ENCODE measurements at regions of chrX and their contacts with region 1.

Region 1: DNA sequence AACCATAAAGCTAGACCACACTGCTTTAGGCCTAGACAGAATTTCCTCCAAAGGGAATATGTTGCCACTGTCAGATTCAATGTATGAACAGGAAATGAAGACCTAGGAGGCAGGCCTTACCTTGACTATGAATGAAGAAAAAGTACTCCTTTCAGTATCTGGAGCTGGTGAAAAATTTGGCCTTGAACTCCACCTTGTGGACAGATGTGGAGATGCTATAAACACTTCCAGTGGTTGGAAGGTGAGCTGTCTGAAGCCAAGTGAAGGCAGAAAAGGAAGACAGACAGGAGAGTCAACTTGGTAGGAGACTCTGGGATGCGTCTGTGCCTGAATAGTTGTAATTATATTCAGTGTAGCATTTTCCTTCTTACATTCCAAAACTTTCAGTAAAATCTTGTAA is 17.2 kb downstream of the SPIN3 start:
- DNase-seq: peak in 1 of 2 experiments; percentile 43
- H3K4me3 ChIP-seq: no peak overlapping the region
- H3K4me3 Mint-ChIP-seq: no peak overlapping the region
- H3K27ac Mint-ChIP-seq: no peak overlapping the region
- H3K4me1 ChIP-seq: no peaks in the 10 kb centered on the region
- H3K4me1 Mint-ChIP-seq: no peaks in the 10 kb centered on the region
- H3K27me3 ChIP-seq: no peaks in the 10 kb centered on the region
- H3K27me3 Mint-ChIP-seq: no peaks in the 10 kb centered on the region
- CTCF ChIP-seq: peak; percentile 35 to 52

Region 2: DNA sequence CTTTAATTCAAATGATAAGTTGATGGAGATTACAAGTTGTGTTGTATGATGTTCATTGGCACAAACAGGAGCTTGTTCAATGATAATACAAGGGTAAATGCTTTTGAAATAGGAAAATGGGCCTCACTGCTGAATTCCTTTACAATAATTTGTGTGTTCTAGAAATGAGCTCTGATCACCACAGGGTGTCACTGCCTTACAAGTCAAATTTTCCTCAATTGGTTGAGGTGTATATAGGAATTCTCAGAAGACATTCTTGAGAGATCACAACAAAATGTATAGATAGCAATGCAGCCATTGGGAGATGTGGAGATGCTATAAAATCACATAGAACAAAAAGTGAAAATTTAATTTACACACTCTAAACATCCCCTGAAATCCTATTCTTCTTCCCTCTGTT is 696.4 kb before region 1 on chrX:
- CTCF ChIA-PET with region 1: no interaction called
- POLR2A ChIA-PET with region 1: no interaction called
- intact Hi-C with region 1: loop called (anchors 5 kb)
- DNase-seq: peak in 1 of 2 experiments; percentile 9
- H3K4me3 ChIP-seq: no peak overlapping the region
- H3K4me3 Mint-ChIP-seq: no peak overlapping the region
- H3K27ac Mint-ChIP-seq: no peak overlapping the region
- H3K4me1 ChIP-seq: no peaks in the 10 kb centered on the region
- H3K4me1 Mint-ChIP-seq: no peaks in the 10 kb centered on the region
- H3K27me3 ChIP-seq: no peaks in the 10 kb centered on the region
- H3K27me3 Mint-ChIP-seq: no peaks in the 10 kb centered on the region
- CTCF ChIP-seq: peak; percentile 19 to 28

Region 3: GRCh38 chrX:56802921-56803849 is 175.0 kb before region 1 on chrX:
- CTCF ChIA-PET with region 1: no interaction called
- POLR2A ChIA-PET with region 1: no interaction called
- intact Hi-C with region 1: loop called (anchors 1 kb)
- DNase-seq: peak in 1 of 2 experiments; percentile 29
- H3K4me3 ChIP-seq: no peak overlapping the region
- H3K4me3 Mint-ChIP-seq: no peak overlapping the region
- H3K27ac Mint-ChIP-seq: no peak overlapping the region
- H3K4me1 ChIP-seq: no peaks in the 10 kb centered on the region
- H3K4me1 Mint-ChIP-seq: no peaks in the 10 kb centered on the region
- H3K27me3 ChIP-seq: no peaks in the 10 kb centered on the region
- H3K27me3 Mint-ChIP-seq: no peaks in the 10 kb centered on the region
- CTCF ChIP-seq: peak in 1 of 2 experiments; percentile 28

Region 4: GRCh38 chrX:56920338-56920997 is 57.7 kb before region 1 on chrX:
- CTCF ChIA-PET with region 1: no interaction called
- POLR2A ChIA-PET with region 1: no interaction called
- intact Hi-C with region 1: no loop called
- DNase-seq: peak in 1 of 2 experiments; percentile 12
- H3K4me3 ChIP-seq: no peak overlapping the region
- H3K4me3 Mint-ChIP-seq: no peak overlapping the region
- H3K27ac Mint-ChIP-seq: no peak overlapping the region
- H3K4me1 ChIP-seq: no peaks in the 10 kb centered on the region
- H3K4me1 Mint-ChIP-seq: peaks cover 8% of the 10 kb centered on the region
- H3K27me3 ChIP-seq: no peaks in the 10 kb centered on the region
- H3K27me3 Mint-ChIP-seq: no peaks in the 10 kb centered on the region
- CTCF ChIP-seq: no peak

Region 5: GRCh38 chrX:56995271-56995994 is 17.3 kb after region 1 on chrX and contains the start of gene SPIN3:
- CTCF ChIA-PET with region 1: no interaction called
- POLR2A ChIA-PET with region 1: no interaction called
- intact Hi-C with region 1: no loop called
- DNase-seq: peak; percentile 92 to 95
- H3K4me3 ChIP-seq: peak within 1 kb of the TSS; percentile 74
- H3K4me3 Mint-ChIP-seq: peak within 1 kb of the TSS; percentile 92
- H3K27ac Mint-ChIP-seq: peak within 1 kb of the TSS; percentile 85
- H3K4me1 ChIP-seq: no peaks in the 10 kb centered on the region
- H3K4me1 Mint-ChIP-seq: no peaks in the 10 kb centered on the region
- H3K27me3 ChIP-seq: no peaks in the 10 kb centered on the region
- H3K27me3 Mint-ChIP-seq: no peaks in the 10 kb centered on the region
- CTCF ChIP-seq: no peak
- total RNA-seq, gene SPIN3: 17.9 TPM in 2 replicates

Region 6: DNA sequence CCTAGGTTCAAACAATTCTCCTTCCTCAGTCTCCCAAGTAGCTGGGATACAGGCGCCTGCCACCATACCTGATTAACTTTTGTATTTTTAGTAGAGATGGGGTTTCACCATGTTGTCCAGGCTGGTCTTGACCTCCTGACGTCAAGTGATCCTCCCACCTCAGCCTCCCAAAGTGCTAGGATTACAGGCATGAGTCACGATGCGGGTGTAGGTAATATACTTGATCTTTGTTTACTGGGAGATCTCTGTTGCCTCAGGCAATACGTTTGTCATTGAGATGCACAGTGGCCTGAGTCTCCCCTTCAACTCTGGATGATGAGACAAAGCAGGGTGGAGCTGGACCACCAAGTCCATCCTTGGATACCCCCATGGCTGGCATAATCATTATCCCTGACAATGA is 61.9 kb after region 1 on chrX:
- CTCF ChIA-PET with region 1: no interaction called
- POLR2A ChIA-PET with region 1: no interaction called
- intact Hi-C with region 1: no loop called
- DNase-seq: no peak
- H3K4me3 ChIP-seq: no peak overlapping the region
- H3K4me3 Mint-ChIP-seq: no peak overlapping the region
- H3K27ac Mint-ChIP-seq: no peak overlapping the region
- H3K4me1 ChIP-seq: no peaks in the 10 kb centered on the region
- H3K4me1 Mint-ChIP-seq: no peaks in the 10 kb centered on the region
- H3K27me3 ChIP-seq: no peaks in the 10 kb centered on the region
- H3K27me3 Mint-ChIP-seq: no peaks in the 10 kb centered on the region
- CTCF ChIP-seq: no peak